Upper lobe of right lung (tissue), 1 donor: ENCODE measurements at regions of chr10 and their contacts with region 1.

Region 1: DNA sequence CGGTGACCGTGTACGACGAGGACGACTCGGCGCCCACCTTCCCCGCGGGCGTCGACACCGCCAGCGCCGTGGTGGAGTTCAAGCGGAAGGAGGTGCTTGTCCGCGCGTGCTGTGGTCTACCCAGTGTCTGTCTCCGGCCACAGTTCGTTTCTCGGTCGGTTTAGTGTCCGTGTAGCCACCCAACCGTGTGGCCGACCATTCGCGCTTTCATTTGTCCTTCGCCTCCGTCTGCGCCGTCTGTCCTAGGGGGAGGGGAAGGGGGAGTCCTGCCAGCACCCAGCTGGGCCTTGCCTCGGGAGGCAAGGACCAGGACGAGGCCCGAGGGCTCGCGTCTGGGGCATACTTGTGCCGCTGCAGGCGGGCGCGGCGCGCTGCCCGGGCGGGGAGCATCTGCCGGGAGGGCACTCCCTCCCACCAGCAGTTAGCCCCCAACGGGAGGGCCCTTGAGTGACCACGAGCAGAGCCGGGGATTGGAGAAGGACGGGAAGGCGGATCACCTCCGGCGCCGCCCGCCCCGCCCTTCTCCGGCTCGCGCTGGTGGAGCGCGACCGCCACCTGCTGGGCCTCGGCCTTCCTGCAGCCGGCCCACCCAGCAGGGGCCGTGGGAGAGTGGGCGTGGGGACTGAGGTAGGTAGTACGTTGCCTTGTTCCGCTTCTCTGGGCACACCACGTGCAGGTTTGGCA is 28.4 kb downstream of the RET start:
- DNase-seq: peak; percentile 89
- ATAC-seq: peak; percentile 97
- H3K4me3 ChIP-seq: peak overlapping the region; percentile 65
- H3K27ac ChIP-seq: no peak overlapping the region
- H3K4me1 ChIP-seq: peaks cover 10% of the 10 kb centered on the region
- H3K27me3 ChIP-seq: peaks cover 11% of the 10 kb centered on the region
- CTCF ChIP-seq: peak; percentile 99

Region 2: DNA sequence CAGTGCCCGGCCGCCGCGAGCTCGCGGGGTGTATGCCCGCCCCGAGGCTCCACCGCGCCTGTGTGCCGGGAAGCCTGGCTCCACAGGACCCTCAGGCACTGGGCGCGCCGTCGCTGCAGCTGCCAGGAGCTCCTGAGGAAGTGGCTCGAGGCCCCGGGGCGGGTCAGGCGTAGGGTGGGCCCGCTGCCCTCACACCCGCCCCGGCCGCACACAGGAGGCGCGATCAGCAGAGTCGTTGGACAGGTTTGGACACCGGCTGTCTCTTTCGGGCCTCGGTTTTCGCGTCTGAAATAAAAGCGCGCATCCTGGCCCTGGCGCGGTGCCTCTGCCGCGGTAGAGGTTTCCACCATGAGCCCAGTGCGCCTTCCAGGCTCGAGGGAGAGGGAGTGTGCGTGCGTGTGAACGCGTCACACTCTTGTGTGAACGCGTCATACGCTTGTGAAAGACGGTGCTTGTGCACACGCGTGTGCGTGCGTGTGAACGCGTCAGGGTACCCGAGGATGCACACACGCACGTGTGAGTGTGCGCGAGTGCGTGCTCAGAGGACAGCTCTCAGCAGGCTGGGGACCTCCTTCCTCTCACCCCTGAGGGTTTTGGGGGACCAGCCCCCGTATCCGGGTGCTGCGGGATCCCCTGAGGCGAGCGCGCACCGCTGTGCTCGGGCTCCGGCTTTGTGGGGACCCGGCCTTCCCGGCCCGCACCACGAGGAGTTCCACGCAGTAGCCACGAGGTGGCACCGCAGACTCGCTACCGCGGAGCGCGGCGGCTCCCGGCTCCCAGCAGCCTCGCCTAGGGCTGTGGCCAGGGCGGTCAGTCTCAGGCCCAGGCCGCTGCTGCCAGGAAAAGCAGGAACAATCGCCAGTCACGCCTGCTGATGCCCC is 238.9 kb before region 1 on chr10:
- intact Hi-C with region 1: loop called (anchors 5 kb)
- DNase-seq: peak; percentile 91
- ATAC-seq: peak; percentile 100
- H3K4me3 ChIP-seq: peak overlapping the region; percentile 16
- H3K27ac ChIP-seq: no peak overlapping the region
- H3K4me1 ChIP-seq: peaks cover 4% of the 10 kb centered on the region
- H3K27me3 ChIP-seq: peaks cover 20% of the 10 kb centered on the region
- CTCF ChIP-seq: peak; percentile 78

Region 3: DNA sequence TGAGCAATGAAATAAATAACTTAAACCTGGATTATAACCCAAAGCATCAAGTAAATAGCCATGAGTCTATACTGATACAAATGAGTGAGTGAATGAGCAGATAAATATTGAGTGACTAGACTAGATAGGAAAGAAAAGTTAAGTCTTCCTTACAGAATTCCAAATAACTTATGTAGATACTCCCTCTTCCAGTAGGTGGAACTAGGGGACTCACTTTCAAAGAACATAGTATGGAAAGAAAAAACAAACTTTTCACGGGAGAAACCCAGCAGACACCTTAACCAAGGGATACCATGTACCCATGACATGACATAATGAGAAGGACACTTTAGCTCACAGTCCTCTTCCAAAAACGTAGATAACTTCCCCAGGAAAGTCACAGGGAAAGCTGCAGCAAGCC is 65.2 kb after region 1 on chr10:
- intact Hi-C with region 1: no loop called
- DNase-seq: no peak
- ATAC-seq: no peak
- H3K4me3 ChIP-seq: no peak overlapping the region
- H3K27ac ChIP-seq: no peak overlapping the region
- H3K4me1 ChIP-seq: peaks cover 16% of the 10 kb centered on the region
- H3K27me3 ChIP-seq: no peaks in the 10 kb centered on the region
- CTCF ChIP-seq: no peak

Region 4: DNA sequence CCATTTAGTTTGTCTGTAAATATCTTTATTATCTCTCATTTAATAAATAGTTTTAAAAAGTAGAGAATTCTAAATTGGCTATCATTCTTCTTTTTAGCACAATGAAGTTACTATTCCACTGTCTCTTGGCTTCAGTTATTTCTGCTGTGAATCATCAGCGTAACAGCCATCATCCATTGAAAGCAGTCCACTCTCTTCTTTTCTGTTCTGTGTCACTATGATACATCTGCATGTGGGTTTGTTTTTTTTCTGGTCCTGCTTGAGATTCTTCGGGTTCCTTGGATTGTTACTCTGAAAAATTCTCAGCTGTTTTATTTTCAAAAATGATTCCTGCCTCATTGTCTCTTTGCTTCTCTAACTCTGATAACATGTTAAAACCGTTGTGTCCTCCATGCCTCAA is 85.5 kb after region 1 on chr10:
- intact Hi-C with region 1: no loop called
- DNase-seq: no peak
- ATAC-seq: no peak
- H3K4me3 ChIP-seq: no peak overlapping the region
- H3K27ac ChIP-seq: no peak overlapping the region
- H3K4me1 ChIP-seq: no peaks in the 10 kb centered on the region
- H3K27me3 ChIP-seq: no peaks in the 10 kb centered on the region
- CTCF ChIP-seq: no peak